Activated T-helper 2 cell treated with anti-CD3 and anti-CD28 coated beads, Interferon-gamma antibody, Interleukin-2, Interleukin-4, amounts not matched to agents 10 μg/mL and 5 μg/mL and 100 μg/mL, durations not matched to agents 14 hours and 24 hours and 36 hours (primary cell): ENCODE measurements at regions of chr1 and their contacts with region 1.

Region 1: GRCh38 chr1:236603991-236604904 is at the start of gene HEATR1:
- DNase-seq: peak; percentile 82
- H3K4me3 Mint-ChIP-seq: peak within 1 kb of the TSS; percentile 90
- H3K27ac Mint-ChIP-seq: peak within 1 kb of the TSS; percentile 89
- H3K4me1 Mint-ChIP-seq: peaks cover 24% of the 10 kb centered on the region
- H3K27me3 Mint-ChIP-seq: peaks cover 5% of the 10 kb centered on the region
- total RNA-seq, gene HEATR1: 62.0 and 66.1 TPM in 2 replicates

Region 2: GRCh38 chr1:236523701-236524141 is 80.5 kb before region 1 on chr1 and contains the start of gene LGALS8:
- intact Hi-C with region 1: loop called (anchors 2 kb)
- DNase-seq: peak; percentile 80
- H3K4me3 Mint-ChIP-seq: peak within 1 kb of the TSS; percentile 98
- H3K27ac Mint-ChIP-seq: peak within 1 kb of the TSS; percentile 99
- H3K4me1 Mint-ChIP-seq: peaks cover 14% of the 10 kb centered on the region
- H3K27me3 Mint-ChIP-seq: peaks cover 18% of the 10 kb centered on the region
- total RNA-seq, gene LGALS8: 70.9 and 74.8 TPM in 2 replicates

Region 3: DNA sequence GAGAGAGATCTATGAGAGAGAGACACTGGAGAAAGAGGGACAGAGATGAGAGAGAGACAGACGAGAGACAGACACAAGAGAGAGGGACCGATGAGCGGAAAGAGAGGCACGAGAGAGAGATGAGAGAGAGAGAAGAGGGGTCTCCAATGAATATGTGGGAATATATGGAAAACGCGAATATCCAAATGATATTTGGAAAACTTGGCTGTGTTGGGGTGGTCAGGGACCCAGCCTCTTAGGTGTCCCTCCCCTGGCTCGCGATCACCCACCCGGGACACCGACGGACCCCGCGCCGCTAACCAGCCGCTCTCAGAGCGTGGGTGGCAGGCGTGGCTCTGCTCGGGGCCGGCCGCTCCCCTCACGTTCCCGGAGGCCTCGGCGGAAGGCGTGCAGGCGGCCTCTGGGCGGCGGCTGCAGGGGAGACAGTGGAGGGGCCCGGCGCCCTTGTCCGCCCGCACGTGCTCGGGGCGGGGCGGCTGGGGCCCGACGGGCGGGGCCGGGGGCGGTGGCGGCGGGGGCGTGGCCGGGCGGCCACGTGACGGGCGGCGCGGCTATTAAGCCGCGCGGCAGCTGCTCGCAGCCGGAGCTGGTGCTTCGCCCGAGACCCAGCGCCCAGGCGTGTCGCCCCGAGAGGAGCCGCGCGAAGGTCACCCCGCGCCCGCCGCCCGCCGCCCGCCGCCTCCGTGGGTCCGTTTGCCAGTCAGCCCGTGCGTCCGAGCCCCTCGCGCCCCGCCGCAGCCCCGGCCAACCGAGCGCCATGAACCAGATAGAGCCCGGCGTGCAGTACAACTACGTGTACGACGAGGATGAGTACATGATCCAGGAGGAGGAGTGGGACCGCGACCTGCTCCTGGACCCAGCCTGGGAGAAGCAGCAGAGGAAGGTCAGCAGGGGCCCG is 81.9 kb after region 1 on chr1 and contains the start of gene ACTN2:
- intact Hi-C with region 1: loop called (anchors 5 kb)
- DNase-seq: peak; percentile 29
- H3K4me3 Mint-ChIP-seq: peak within 1 kb of the TSS; percentile 72
- H3K27ac Mint-ChIP-seq: no peak within 1 kb of the TSS
- H3K4me1 Mint-ChIP-seq: peaks cover 8% of the 10 kb centered on the region
- H3K27me3 Mint-ChIP-seq: peaks cover 56% of the 10 kb centered on the region
- total RNA-seq, gene ACTN2: 0.21 and 0.23 TPM in 2 replicates

Region 4: GRCh38 chr1:236795035-236795756 is 190.9 kb after region 1 on chr1 and contains the start of gene MTR:
- intact Hi-C with region 1: loop called (anchors 2 kb)
- DNase-seq: peak; percentile 94
- H3K4me3 Mint-ChIP-seq: peak within 1 kb of the TSS; percentile 92
- H3K27ac Mint-ChIP-seq: peak within 1 kb of the TSS; percentile 98
- H3K4me1 Mint-ChIP-seq: peaks cover 32% of the 10 kb centered on the region
- H3K27me3 Mint-ChIP-seq: peaks cover 10% of the 10 kb centered on the region
- total RNA-seq, gene MTR: 59.2 and 62.2 TPM in 2 replicates

Region 5: GRCh38 chr1:236868625-236869467 is 264.6 kb after region 1 on chr1:
- intact Hi-C with region 1: loop called (anchors 10 kb)
- DNase-seq: peak; percentile 18
- H3K4me3 Mint-ChIP-seq: no peak overlapping the region
- H3K27ac Mint-ChIP-seq: no peak overlapping the region
- H3K4me1 Mint-ChIP-seq: peaks cover 17% of the 10 kb centered on the region
- H3K27me3 Mint-ChIP-seq: no peaks in the 10 kb centered on the region

Region 6: GRCh38 chr1:237386362-237387143 is 782.3 kb after region 1 on chr1:
- intact Hi-C with region 1: loop called (anchors 10 kb)
- DNase-seq: no peak
- H3K4me3 Mint-ChIP-seq: no peak overlapping the region
- H3K27ac Mint-ChIP-seq: no peak overlapping the region
- H3K4me1 Mint-ChIP-seq: peaks cover 9% of the 10 kb centered on the region
- H3K27me3 Mint-ChIP-seq: no peaks in the 10 kb centered on the region